ENCODE measurements at regions of chr14 and their contacts with region 1.

Region 1: DNA sequence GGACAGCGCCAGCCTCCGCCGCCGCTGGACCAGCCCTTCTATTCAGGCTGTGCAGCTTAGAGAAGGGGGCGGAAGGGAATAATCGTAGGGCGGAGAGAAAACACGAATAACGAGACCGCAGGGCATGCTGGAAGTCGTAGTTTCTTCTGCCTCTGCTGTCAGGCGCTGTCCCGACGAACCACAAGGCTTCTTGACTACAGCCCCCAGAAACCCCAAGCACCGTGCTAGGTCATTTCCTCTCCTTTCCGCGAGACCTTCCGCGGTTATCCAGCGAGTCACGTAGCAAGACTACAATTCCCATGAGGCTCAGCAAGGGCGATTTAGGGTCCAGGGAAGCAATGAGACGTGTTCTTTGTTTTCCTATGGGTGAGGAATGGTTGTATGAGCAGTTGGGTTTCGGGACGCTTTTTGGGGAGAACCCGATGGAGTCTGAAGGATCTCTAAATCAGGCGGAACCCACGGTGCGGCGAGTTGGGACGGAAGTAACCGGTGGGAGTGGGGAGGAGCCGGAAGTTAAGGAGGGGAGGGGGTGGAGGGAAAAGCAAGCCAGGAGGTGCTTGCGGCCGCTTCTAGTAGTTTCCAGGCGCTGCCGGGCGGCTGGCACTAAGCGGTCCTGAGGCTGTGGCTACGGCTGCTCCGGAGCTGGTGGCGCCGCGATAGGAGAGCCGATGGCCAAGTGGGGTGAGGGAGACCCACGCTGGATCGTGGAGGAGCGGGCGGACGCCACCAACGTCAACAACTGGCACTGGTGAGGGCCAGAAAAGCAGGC is at the starts of genes AHSA1 and VIPAS39:
- DNase-seq: peak; percentile 95 to 99 (median 96)
- ATAC-seq: peak; percentile 97
- H3K4me3 ChIP-seq: peak within 1 kb of the TSS; percentile 92 to 94
- H3K27ac ChIP-seq: peak within 1 kb of the TSS; percentile 82 to 96 (median 93)
- H3K4me1 ChIP-seq: peaks cover 20% of the 10 kb centered on the region
- H3K27me3 ChIP-seq: no peaks in the 10 kb centered on the region
- CTCF ChIP-seq: peak in 2 of 7 experiments; percentile 1 to 4
- POLR2A ChIP-seq: peak; percentile 39 to 84 (median 82)
- total RNA-seq, gene AHSA1: 25.1 to 35.3 TPM
- total RNA-seq, gene VIPAS39: 6.3 to 17.1 TPM

Region 2: GRCh38 chr14:77314043-77314442 is 143.7 kb before region 1 on chr14:
- intact Hi-C with region 1: loop called (anchors 5 kb)
- DNase-seq: no peak
- ATAC-seq: no peak
- H3K4me3 ChIP-seq: no peak overlapping the region
- H3K27ac ChIP-seq: no peak overlapping the region
- H3K4me1 ChIP-seq: peaks cover 33% of the 10 kb centered on the region
- H3K27me3 ChIP-seq: no peaks in the 10 kb centered on the region
- CTCF ChIP-seq: no peak
- POLR2A ChIP-seq: no peak

Region 3: GRCh38 chr14:77388959-77389358 is 68.7 kb before region 1 on chr14:
- intact Hi-C with region 1: loop called (anchors 10 kb)
- DNase-seq: no peak
- ATAC-seq: no peak
- H3K4me3 ChIP-seq: no peak overlapping the region
- H3K27ac ChIP-seq: no peak overlapping the region
- H3K4me1 ChIP-seq: no peaks in the 10 kb centered on the region
- H3K27me3 ChIP-seq: no peaks in the 10 kb centered on the region
- CTCF ChIP-seq: no peak
- POLR2A ChIP-seq: no peak

Measured in body of pancreas (tissue), 4 donors.